GM12878 (cell line): ENCODE measurements at regions of chr12 and their contacts with region 1.

Region 1: GRCh38 chr12:76031537-76032073 is at the start of gene PHLDA1:
- DNase-seq: peak; percentile 79
- ATAC-seq: peak; percentile 84
- H3K4me3 ChIP-seq: peak within 1 kb of the TSS; percentile 85
- H3K27ac ChIP-seq: peak within 1 kb of the TSS; percentile 75
- H3K4me1 ChIP-seq: peaks cover 17% of the 10 kb centered on the region
- H3K27me3 ChIP-seq: no peaks in the 10 kb centered on the region; a peak in 1 of 4 replicates
- CTCF ChIP-seq: peak; percentile 57 to 89 (median 72)
- EP300 ChIP-seq: peak in 1 of 2 experiments; percentile 60; a peak in 1 of 4 replicates
- POLR2A ChIP-seq: peak; percentile 94
- RAD21 ChIP-seq: peak; percentile 81
- polyA plus RNA-seq, gene PHLDA1: 0.66 to 0.87 TPM

Region 2: GRCh38 chr12:75322464-75322863 is 709.1 kb before region 1 on chr12:
- CTCF ChIA-PET with region 1: no interaction called
- POLR2A ChIA-PET with region 1: no interaction called
- RAD21 ChIA-PET with region 1: no interaction called
- SMC1A ChIA-PET with region 1: no interaction called
- in situ Hi-C with region 1: no loop called
- intact Hi-C with region 1: no loop called
- DNase-seq: no peak
- ATAC-seq: no peak
- H3K4me3 ChIP-seq: no peak overlapping the region
- H3K27ac ChIP-seq: no peak overlapping the region
- H3K4me1 ChIP-seq: no peaks in the 10 kb centered on the region
- H3K27me3 ChIP-seq: no peaks in the 10 kb centered on the region
- CTCF ChIP-seq: no peak
- EP300 ChIP-seq: no peak
- POLR2A ChIP-seq: no peak
- RAD21 ChIP-seq: no peak

Region 3: GRCh38 chr12:75480469-75480949 is 551.1 kb before region 1 on chr12 and contains the start of gene GLIPR1:
- CTCF ChIA-PET with region 1: interaction called, 43 read pairs
- POLR2A ChIA-PET with region 1: interaction called, 9 read pairs
- RAD21 ChIA-PET with region 1: interaction called, 63 read pairs
- SMC1A ChIA-PET with region 1: interaction called, 50 read pairs
- in situ Hi-C with region 1: no loop called
- intact Hi-C with region 1: no loop called
- DNase-seq: peak; percentile 72
- ATAC-seq: peak; percentile 85
- H3K4me3 ChIP-seq: peak within 1 kb of the TSS; percentile 83
- H3K27ac ChIP-seq: peak within 1 kb of the TSS; percentile 88
- H3K4me1 ChIP-seq: peaks cover 28% of the 10 kb centered on the region
- H3K27me3 ChIP-seq: no peaks in the 10 kb centered on the region
- CTCF ChIP-seq: no peak
- EP300 ChIP-seq: no peak; a peak in 1 of 4 replicates
- POLR2A ChIP-seq: peak; percentile 91
- RAD21 ChIP-seq: no peak
- polyA plus RNA-seq, gene GLIPR1: 39.8 to 62.6 TPM

Region 4: DNA sequence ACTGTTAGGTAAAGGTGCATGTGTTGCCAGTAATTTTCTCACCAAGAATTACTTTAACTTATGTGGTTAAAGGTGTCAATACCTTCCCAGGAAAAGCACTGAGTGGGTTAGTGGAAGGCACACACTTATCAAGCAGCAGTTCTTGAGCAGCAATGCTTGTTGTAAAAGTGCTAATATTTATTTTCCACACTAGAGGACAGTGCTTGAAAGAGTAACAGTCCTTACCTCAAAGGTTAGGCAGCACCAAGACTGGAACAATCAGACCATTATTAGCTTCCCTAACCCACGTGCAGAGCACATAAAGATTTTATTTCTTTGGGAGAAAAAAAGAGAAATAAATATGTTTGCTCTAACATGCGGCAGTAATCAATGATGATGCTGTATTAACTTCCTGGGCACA is 471.4 kb before region 1 on chr12:
- CTCF ChIA-PET with region 1: interaction called, 34 read pairs
- POLR2A ChIA-PET with region 1: interaction called, 3 read pairs
- RAD21 ChIA-PET with region 1: interaction called, 89 read pairs
- SMC1A ChIA-PET with region 1: interaction called, 94 read pairs
- in situ Hi-C with region 1: no loop called
- intact Hi-C with region 1: no loop called
- DNase-seq: no peak
- ATAC-seq: peak; percentile 88
- H3K4me3 ChIP-seq: no peak overlapping the region
- H3K27ac ChIP-seq: no peak overlapping the region
- H3K4me1 ChIP-seq: no peaks in the 10 kb centered on the region
- H3K27me3 ChIP-seq: no peaks in the 10 kb centered on the region
- CTCF ChIP-seq: peak; percentile 27 to 63 (median 31); a peak in 4 of 6 replicates
- EP300 ChIP-seq: no peak
- POLR2A ChIP-seq: no peak
- RAD21 ChIP-seq: peak; percentile 84

Region 5: GRCh38 chr12:75658901-75659383 is 372.7 kb before region 1 on chr12:
- CTCF ChIA-PET with region 1: no interaction called
- POLR2A ChIA-PET with region 1: no interaction called
- RAD21 ChIA-PET with region 1: no interaction called
- SMC1A ChIA-PET with region 1: no interaction called
- in situ Hi-C with region 1: no loop called
- intact Hi-C with region 1: no loop called
- DNase-seq: no peak
- ATAC-seq: 0 out of 3 replicates have a peak, but pooled peaks have one; percentile 25
- H3K4me3 ChIP-seq: no peak overlapping the region
- H3K27ac ChIP-seq: no peak overlapping the region
- H3K4me1 ChIP-seq: peaks cover 6% of the 10 kb centered on the region; the same call in 1 of the 2 replicates
- H3K27me3 ChIP-seq: no peaks in the 10 kb centered on the region
- CTCF ChIP-seq: no peak
- EP300 ChIP-seq: no peak
- POLR2A ChIP-seq: no peak
- RAD21 ChIP-seq: no peak

Region 6: DNA sequence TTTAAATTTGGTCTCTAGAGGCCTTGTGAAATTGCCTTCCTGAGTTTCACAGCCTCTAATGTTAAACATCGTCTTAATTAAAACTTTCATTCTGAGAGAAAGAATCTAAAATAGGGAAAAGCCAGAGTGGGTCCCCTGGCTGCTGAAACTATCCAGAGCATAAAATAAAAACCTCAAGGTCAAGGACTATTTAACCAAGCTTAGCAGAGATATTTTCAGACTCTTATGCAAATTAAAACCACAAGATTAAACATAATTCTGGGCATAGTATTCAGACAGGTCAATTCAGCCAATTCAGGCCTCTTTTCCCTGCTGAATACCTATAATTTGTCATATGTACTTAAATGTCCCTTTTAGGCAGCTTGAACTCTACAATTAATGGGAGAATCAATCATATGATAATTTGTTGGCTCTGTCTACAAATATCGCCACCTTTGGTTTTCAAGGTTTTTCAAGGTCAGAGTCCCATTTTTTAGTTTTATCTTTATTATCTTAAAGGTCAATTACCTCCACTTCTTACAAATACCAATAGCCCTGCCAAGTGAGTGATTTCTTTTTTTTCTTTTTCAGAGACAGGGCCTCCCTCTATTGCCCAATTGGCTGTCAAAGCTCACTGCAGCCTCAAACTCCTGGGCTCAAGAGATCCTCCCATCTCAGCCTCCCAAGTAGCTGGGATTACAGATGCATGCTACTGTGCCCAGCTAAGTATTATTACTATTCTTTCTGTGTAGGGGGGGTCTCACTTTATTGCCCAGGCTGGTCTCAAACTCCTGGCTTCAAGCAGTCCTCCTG is 257.1 kb before region 1 on chr12:
- CTCF ChIA-PET with region 1: no interaction called
- POLR2A ChIA-PET with region 1: no interaction called
- RAD21 ChIA-PET with region 1: interaction called, 4 read pairs
- SMC1A ChIA-PET with region 1: interaction called, 5 read pairs
- in situ Hi-C with region 1: no loop called
- intact Hi-C with region 1: loop called (anchors 5 kb)
- DNase-seq: no peak
- ATAC-seq: peak; percentile 85
- H3K4me3 ChIP-seq: no peak overlapping the region
- H3K27ac ChIP-seq: no peak overlapping the region
- H3K4me1 ChIP-seq: peaks cover 6% of the 10 kb centered on the region; the same call in 1 of the 2 replicates
- H3K27me3 ChIP-seq: no peaks in the 10 kb centered on the region
- CTCF ChIP-seq: no peak
- EP300 ChIP-seq: no peak
- POLR2A ChIP-seq: no peak
- RAD21 ChIP-seq: no peak

Region 7: GRCh38 chr12:75933101-75933500 is 98.5 kb before region 1 on chr12:
- CTCF ChIA-PET with region 1: interaction called, 10 read pairs
- POLR2A ChIA-PET with region 1: interaction called, 5 read pairs
- RAD21 ChIA-PET with region 1: interaction called, 48 read pairs
- SMC1A ChIA-PET with region 1: interaction called, 78 read pairs
- in situ Hi-C with region 1: no loop called
- intact Hi-C with region 1: loop called (anchors 1 kb)
- DNase-seq: no peak
- ATAC-seq: no peak
- H3K4me3 ChIP-seq: no peak overlapping the region
- H3K27ac ChIP-seq: no peak overlapping the region
- H3K4me1 ChIP-seq: peaks cover 12% of the 10 kb centered on the region
- H3K27me3 ChIP-seq: no peaks in the 10 kb centered on the region
- CTCF ChIP-seq: no peak
- EP300 ChIP-seq: no peak
- POLR2A ChIP-seq: no peak
- RAD21 ChIP-seq: no peak

Region 8: DNA sequence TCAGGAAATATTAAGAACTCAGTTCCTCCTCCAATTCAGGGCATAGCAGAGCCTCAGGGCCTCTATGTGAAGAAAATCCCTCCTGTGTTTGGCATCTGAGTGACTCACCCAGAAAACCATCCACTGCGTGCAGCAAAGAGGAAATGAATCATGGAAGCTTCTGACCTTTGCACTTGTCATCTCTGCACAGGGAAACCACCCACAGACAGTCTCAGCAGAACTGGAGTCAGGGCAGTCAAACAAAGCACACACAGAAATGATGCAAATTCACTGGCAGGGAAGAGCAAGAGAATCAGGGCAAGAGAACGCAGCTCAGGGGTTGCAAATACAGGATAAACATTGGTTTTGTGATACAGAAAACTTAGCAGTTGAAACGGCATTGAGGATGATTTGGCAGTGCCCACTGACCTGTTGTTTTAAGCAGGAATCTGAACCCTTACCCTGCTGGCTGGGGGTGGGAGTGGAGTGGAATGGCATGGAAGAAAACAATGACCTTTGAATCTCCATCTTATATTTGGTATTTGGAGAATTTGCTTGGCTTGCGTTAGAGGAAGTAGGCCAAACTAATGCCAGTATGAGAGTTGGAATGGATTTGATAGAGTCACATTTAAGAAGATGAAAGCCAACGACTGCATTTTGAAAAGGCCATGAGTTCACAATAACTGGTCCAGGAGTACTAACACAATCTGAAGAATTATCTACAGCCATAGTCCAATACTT is 53.5 kb before region 1 on chr12:
- CTCF ChIA-PET with region 1: interaction called, 24 read pairs
- POLR2A ChIA-PET with region 1: interaction called, 111 read pairs
- RAD21 ChIA-PET with region 1: interaction called, 125 read pairs
- SMC1A ChIA-PET with region 1: interaction called, 327 read pairs
- in situ Hi-C with region 1: no loop called
- intact Hi-C with region 1: loop called (anchors 1 kb)
- DNase-seq: peak; percentile 94
- ATAC-seq: peak; percentile 86
- H3K4me3 ChIP-seq: no peak overlapping the region
- H3K27ac ChIP-seq: peak overlapping the region; percentile 71
- H3K4me1 ChIP-seq: peaks cover 32% of the 10 kb centered on the region
- H3K27me3 ChIP-seq: no peaks in the 10 kb centered on the region
- CTCF ChIP-seq: no peak
- EP300 ChIP-seq: peak; percentile 97 to 98
- POLR2A ChIP-seq: no peak
- RAD21 ChIP-seq: peak; percentile 25; the same call in 1 of the 2 replicates

Region 9: GRCh38 chr12:76083904-76084862 is 52.6 kb after region 1 on chr12 and contains the start of gene NAP1L1:
- CTCF ChIA-PET with region 1: interaction called, 5 read pairs
- POLR2A ChIA-PET with region 1: interaction called, 14 read pairs
- RAD21 ChIA-PET with region 1: interaction called, 8 read pairs
- SMC1A ChIA-PET with region 1: interaction called, 11 read pairs
- in situ Hi-C with region 1: no loop called
- intact Hi-C with region 1: no loop called
- DNase-seq: peak; percentile 79
- ATAC-seq: peak; percentile 89
- H3K4me3 ChIP-seq: peak within 1 kb of the TSS; percentile 74
- H3K27ac ChIP-seq: peak within 1 kb of the TSS; percentile 91
- H3K4me1 ChIP-seq: peaks cover 11% of the 10 kb centered on the region
- H3K27me3 ChIP-seq: no peaks in the 10 kb centered on the region; a peak in 1 of 4 replicates
- CTCF ChIP-seq: no peak
- EP300 ChIP-seq: no peak
- POLR2A ChIP-seq: peak; percentile 94
- RAD21 ChIP-seq: no peak
- polyA plus RNA-seq, gene NAP1L1: 380 to 655 TPM

Region 10: GRCh38 chr12:76666290-76666835 is 634.8 kb after region 1 on chr12:
- CTCF ChIA-PET with region 1: no interaction called
- POLR2A ChIA-PET with region 1: no interaction called
- RAD21 ChIA-PET with region 1: no interaction called
- SMC1A ChIA-PET with region 1: no interaction called
- in situ Hi-C with region 1: no loop called
- intact Hi-C with region 1: no loop called
- DNase-seq: no peak
- ATAC-seq: no peak
- H3K4me3 ChIP-seq: no peak overlapping the region
- H3K27ac ChIP-seq: no peak overlapping the region
- H3K4me1 ChIP-seq: no peaks in the 10 kb centered on the region
- H3K27me3 ChIP-seq: no peaks in the 10 kb centered on the region
- CTCF ChIP-seq: no peak
- EP300 ChIP-seq: no peak
- POLR2A ChIP-seq: no peak
- RAD21 ChIP-seq: no peak